PC-9 (cell line): ENCODE measurements at regions of chr3 and their contacts with region 1.

Region 1: GRCh38 chr3:184085389-184085852 is 11.4 kb upstream of the HTR3E start:
- DNase-seq: peak in 1 of 2 experiments; percentile 61
- H3K4me3 ChIP-seq: no peak overlapping the region
- H3K27ac ChIP-seq: no peak overlapping the region
- H3K4me1 ChIP-seq: 0 out of 2 replicates have a peak, but pooled peaks cover 4% of the 10 kb centered on the region
- H3K27me3 ChIP-seq: no peaks in the 10 kb centered on the region
- CTCF ChIP-seq: no peak

Region 2: DNA sequence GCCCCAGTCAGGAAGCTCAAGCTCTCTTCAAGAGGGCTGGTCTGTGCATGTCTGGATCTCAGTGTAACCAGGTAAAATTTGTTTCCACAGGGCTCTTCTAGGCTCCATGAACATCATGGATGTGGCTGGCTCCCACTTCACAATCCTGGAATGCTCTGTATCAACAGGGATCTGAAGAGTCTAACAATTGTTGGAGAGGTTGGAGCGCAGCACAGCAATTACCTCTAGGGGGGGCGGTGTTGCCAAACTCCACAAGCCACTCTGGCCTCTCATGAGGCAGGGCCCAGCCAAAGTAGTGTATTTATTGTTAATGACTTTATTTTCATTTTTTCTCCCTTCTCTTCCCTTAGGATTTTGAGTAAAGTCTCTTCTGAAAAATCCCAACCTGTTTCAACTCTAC is 43.6 kb after region 1 on chr3:
- CTCF ChIA-PET with region 1: no interaction called
- POLR2A ChIA-PET with region 1: interaction called, 10 read pairs
- intact Hi-C with region 1: no loop called
- DNase-seq: peak in 1 of 2 experiments; percentile 25
- H3K4me3 ChIP-seq: no peak overlapping the region
- H3K27ac ChIP-seq: no peak overlapping the region
- H3K4me1 ChIP-seq: peaks cover 13% of the 10 kb centered on the region
- H3K27me3 ChIP-seq: no peaks in the 10 kb centered on the region
- CTCF ChIP-seq: peak; percentile 41; the same call in 1 of the 2 replicates

Region 3: GRCh38 chr3:184218814-184219213 is 133.4 kb after region 1 on chr3:
- CTCF ChIA-PET with region 1: interaction called, 12 read pairs
- POLR2A ChIA-PET with region 1: no interaction called
- intact Hi-C with region 1: no loop called
- DNase-seq: no peak
- H3K4me3 ChIP-seq: no peak overlapping the region
- H3K27ac ChIP-seq: no peak overlapping the region
- H3K4me1 ChIP-seq: no peaks in the 10 kb centered on the region
- H3K27me3 ChIP-seq: 0 out of 2 replicates have a peak, but pooled peaks cover 4% of the 10 kb centered on the region
- CTCF ChIP-seq: no peak